H1 (cell line): ENCODE measurements at regions of chr5 and their contacts with region 1.

Region 1: DNA sequence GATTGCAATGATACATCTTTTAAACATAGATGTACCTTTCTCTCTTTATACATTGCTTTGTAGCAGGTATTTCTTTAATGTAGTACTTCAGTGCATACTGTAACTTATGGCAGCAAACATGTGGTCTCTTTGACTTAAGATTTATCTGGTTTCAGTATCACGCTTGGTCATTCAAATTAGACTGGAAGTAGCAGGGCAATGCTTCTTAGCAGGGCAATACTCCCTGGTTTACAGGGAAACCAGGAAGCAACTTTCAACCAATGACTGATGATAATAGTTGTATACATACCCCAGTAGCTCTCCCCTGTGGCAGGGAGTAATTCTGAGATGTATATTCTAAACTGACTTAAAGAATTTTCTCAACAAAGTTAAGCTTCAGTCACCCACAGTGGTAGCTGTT is 761.1 kb upstream of the CDH10 start:
- DNase-seq: no peak
- H3K4me3 ChIP-seq: no peak overlapping the region
- H3K27ac ChIP-seq: no peak overlapping the region
- H3K4me1 ChIP-seq: no peaks in the 10 kb centered on the region
- H3K27me3 ChIP-seq: no peaks in the 10 kb centered on the region
- CTCF ChIP-seq: no peak
- EP300 ChIP-seq: no peak
- POLR2A ChIP-seq: no peak
- RAD21 ChIP-seq: no peak

Region 2: GRCh38 chr5:25255136-25255535 is 150.7 kb before region 1 on chr5:
- CTCF ChIA-PET with region 1: no interaction called
- POLR2A ChIA-PET with region 1: no interaction called
- DNase-seq: no peak
- H3K4me3 ChIP-seq: no peak overlapping the region
- H3K27ac ChIP-seq: no peak overlapping the region
- H3K4me1 ChIP-seq: no peaks in the 10 kb centered on the region
- H3K27me3 ChIP-seq: no peaks in the 10 kb centered on the region
- CTCF ChIP-seq: no peak
- EP300 ChIP-seq: no peak
- POLR2A ChIP-seq: no peak
- RAD21 ChIP-seq: no peak

Region 3: GRCh38 chr5:25418319-25418859 is 12.5 kb after region 1 on chr5:
- CTCF ChIA-PET with region 1: interaction called, 3 read pairs
- POLR2A ChIA-PET with region 1: interaction called, 15 read pairs
- DNase-seq: no peak
- H3K4me3 ChIP-seq: no peak overlapping the region
- H3K27ac ChIP-seq: no peak overlapping the region
- H3K4me1 ChIP-seq: no peaks in the 10 kb centered on the region
- H3K27me3 ChIP-seq: no peaks in the 10 kb centered on the region
- CTCF ChIP-seq: no peak
- EP300 ChIP-seq: no peak
- POLR2A ChIP-seq: peak; percentile 70 to 75; a peak in 2 of 3 replicates
- RAD21 ChIP-seq: no peak

Region 4: DNA sequence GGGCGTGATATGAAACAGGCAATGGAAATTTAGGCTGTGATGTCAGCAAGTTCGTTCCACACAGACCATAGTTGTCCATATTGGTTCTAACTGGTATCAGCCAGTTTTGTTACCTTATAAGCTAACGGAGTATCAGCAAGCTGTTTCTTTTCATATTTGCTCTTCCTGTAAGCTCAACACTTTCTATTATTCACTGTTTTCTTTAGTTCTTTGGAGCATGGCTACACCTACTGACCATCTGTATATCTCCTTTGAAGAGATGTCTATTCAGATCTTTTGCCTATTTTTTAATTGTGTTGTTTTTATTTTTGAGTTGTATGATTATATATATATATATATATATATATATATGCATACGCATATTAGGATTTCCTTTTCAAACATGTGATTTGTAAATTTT is 296.1 kb after region 1 on chr5:
- CTCF ChIA-PET with region 1: no interaction called
- POLR2A ChIA-PET with region 1: no interaction called
- DNase-seq: no peak
- H3K4me3 ChIP-seq: no peak overlapping the region
- H3K27ac ChIP-seq: no peak overlapping the region
- H3K4me1 ChIP-seq: no peaks in the 10 kb centered on the region
- H3K27me3 ChIP-seq: no peaks in the 10 kb centered on the region
- CTCF ChIP-seq: no peak
- EP300 ChIP-seq: no peak
- POLR2A ChIP-seq: no peak
- RAD21 ChIP-seq: no peak